Activated T-helper 1 cell treated with anti-CD3 and anti-CD28 coated beads, Interleukin-12 subunit alpha, Interleukin-12 subunit beta, Interleukin-2, Interleukin-4 antibody, amounts not matched to agents 30 ng/mL and 10 ng/mL and 1 ng/mL, durations not matched to agents 14 hours and 24 hours and 36 hours (primary cell): ENCODE measurements at regions of chr10 and their contacts with region 1.

Region 1: GRCh38 chr10:89029785-89030437 is 39.3 kb downstream of the FAS start:
- DNase-seq: peak; percentile 50
- H3K4me3 Mint-ChIP-seq: no peak overlapping the region
- H3K27ac Mint-ChIP-seq: no peak overlapping the region
- H3K4me1 Mint-ChIP-seq: peaks cover 31% of the 10 kb centered on the region
- H3K27me3 Mint-ChIP-seq: peaks cover 2% of the 10 kb centered on the region

Region 2: DNA sequence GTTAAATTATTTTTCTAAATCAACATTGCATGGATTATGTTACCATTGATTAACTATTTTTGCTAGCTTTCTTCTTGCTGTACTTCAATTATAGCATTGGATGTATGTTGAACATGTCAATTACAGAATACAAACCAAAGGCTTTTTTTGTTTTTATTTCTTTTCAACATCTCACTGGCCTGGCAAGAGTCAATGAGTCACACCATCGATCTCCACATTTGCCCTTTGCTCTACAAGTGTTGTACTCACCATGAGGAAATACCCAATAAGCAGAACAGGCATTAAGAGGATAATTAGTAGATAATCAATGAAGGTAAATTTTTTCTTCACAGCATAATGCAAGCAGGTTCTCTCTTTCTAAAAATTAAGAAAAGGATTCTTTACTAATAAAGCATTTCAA is 201.6 kb before region 1 on chr10:
- intact Hi-C with region 1: loop called (anchors 5 kb)
- DNase-seq: no peak
- H3K4me3 Mint-ChIP-seq: peak overlapping the region; percentile 12
- H3K27ac Mint-ChIP-seq: no peak overlapping the region
- H3K4me1 Mint-ChIP-seq: peaks cover 84% of the 10 kb centered on the region
- H3K27me3 Mint-ChIP-seq: no peaks in the 10 kb centered on the region

Region 3: DNA sequence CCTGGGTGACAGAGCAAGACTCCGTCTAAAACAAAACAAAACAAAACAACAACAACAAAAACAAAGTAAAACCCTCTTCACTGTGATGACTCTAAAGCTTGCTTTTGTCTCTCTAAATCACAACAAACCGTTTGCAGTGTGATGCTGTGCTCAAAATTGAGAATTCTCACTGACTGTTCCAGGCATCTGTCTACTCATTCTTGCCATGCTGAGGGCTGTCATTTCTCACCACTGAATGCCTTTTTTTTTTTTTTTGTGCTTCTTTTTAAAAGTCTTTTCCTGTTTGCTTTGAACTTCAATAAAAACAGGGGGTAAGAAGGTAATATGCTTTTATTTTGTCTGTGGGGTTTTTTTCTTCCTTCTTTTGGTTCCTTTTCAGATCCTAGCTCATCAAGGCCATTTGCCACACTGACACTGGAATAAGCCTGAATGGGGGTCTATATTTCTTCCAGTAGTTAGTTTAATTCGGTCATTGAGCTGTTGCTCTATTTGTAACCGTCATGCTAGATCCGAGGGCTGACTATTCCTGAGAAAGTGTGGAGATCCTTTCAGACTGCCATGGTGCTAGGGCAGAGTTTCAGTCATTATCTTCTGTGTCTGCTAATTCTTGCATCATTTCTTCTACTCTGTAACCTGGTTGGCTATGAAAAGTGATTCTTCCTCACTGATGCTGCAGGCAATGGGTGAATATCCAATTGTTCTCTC is 28.7 kb before region 1 on chr10:
- intact Hi-C with region 1: loop called (anchors 1 kb)
- DNase-seq: no peak
- H3K4me3 Mint-ChIP-seq: peak overlapping the region; percentile 37
- H3K27ac Mint-ChIP-seq: peak overlapping the region; percentile 81
- H3K4me1 Mint-ChIP-seq: peaks cover 76% of the 10 kb centered on the region
- H3K27me3 Mint-ChIP-seq: no peaks in the 10 kb centered on the region

Region 4: DNA sequence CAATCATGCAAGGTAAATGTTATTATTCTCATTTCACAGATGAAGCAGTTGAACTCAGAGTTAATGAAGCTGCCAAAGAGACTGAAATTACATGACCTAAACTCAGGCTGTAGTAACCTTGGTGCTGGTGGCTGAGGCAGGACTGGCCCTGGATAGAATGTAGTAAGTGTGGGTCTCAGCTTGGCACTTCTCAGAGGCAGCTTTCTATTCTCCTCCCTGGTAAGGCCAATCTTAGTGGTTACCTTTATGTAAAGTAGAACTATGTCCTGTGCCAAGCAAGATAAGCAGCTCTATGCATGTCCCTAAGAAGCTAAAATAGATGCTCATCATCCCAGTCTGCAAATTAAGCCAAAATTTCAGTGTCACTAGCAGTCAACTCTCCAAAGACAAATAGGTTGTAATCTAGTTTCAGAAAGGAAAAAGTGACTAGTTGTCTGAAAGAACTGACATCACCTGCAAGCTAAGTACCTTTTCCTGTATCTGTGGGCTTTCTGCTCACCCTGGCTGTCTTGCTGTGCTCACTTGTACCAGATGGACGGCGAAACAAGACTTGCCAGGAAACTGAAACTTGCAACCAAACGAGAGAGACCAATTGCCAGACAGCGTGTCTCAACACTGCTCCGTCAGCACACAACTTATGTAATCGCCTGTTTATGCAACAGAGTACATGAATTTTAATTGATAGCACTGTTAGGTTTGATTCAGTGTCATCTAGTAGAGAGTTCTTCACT is 133.5 kb after region 1 on chr10:
- intact Hi-C with region 1: loop called (anchors 1 kb)
- DNase-seq: peak; percentile 56
- H3K4me3 Mint-ChIP-seq: peak overlapping the region; percentile 57
- H3K27ac Mint-ChIP-seq: peak overlapping the region; percentile 76
- H3K4me1 Mint-ChIP-seq: peaks cover 35% of the 10 kb centered on the region
- H3K27me3 Mint-ChIP-seq: peaks cover 41% of the 10 kb centered on the region

Region 5: DNA sequence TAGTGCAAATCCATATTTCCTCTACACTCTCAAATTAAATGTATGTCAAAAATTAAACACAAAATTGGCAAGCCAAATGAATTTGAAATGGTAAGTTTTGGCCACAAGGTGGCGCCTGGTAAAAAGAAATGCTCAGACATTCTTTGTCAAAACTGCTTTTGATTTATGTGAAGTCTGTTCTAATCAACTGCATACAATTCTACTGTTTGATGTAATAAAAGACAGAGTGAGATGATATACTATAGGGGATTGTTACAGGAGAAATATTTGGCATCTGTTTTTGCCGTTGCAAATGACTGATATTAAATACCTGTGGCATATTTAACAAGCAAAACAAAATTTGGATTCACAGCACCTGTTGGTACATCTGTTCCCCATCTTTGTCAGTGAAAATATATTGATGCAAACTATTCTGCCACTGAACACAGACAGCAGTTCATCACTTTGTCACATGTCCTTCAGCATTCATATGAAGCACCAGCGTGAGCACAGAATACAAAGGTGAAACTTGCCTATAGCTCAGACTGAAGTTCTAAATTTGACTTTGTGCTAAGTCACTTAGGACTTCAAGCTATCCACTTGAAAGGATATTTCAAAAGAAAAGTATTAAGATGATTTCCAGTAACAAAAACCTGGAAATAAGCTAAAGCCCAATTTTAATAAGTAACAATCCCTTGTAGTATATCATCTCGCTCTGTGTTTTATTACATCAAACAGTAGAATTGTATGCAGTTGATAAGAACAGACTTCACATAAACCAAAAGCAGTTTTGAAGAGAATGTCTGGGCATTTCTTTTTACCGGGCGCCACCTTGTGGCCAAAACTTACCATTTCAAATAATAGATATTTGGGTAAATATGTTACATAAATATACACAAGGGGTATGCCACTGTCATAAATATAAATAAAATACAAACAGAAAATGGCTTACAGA is 187.4 kb after region 1 on chr10:
- intact Hi-C with region 1: loop called (anchors 1 kb)
- DNase-seq: peak; percentile 22
- H3K4me3 Mint-ChIP-seq: no peak overlapping the region
- H3K27ac Mint-ChIP-seq: no peak overlapping the region
- H3K4me1 Mint-ChIP-seq: peaks cover 17% of the 10 kb centered on the region
- H3K27me3 Mint-ChIP-seq: peaks cover 1% of the 10 kb centered on the region